Activated CD4-positive, alpha-beta memory T cell treated with anti-CD3 and anti-CD28 coated beads for 36 hours (primary cell): ENCODE measurements at regions of chr12 and their contacts with region 1.

Region 1: GRCh38 chr12:111396726-111397445 is 8.8 kb upstream of the SH2B3 start:
- DNase-seq: peak; percentile 90
- H3K4me3 Mint-ChIP-seq: peak overlapping the region; percentile 65
- H3K27ac Mint-ChIP-seq: peak overlapping the region; percentile 51
- H3K4me1 Mint-ChIP-seq: peaks cover 25% of the 10 kb centered on the region
- H3K27me3 Mint-ChIP-seq: peaks cover 9% of the 10 kb centered on the region

Region 2: GRCh38 chr12:111193496-111193895 is 203.4 kb before region 1 on chr12:
- CTCF ChIA-PET with region 1: no interaction called
- POLR2A ChIA-PET with region 1: no interaction called
- intact Hi-C with region 1: no loop called
- DNase-seq: no peak
- H3K4me3 Mint-ChIP-seq: no peak overlapping the region
- H3K27ac Mint-ChIP-seq: no peak overlapping the region
- H3K4me1 Mint-ChIP-seq: no peaks in the 10 kb centered on the region
- H3K27me3 Mint-ChIP-seq: peaks cover 7% of the 10 kb centered on the region

Region 3: DNA sequence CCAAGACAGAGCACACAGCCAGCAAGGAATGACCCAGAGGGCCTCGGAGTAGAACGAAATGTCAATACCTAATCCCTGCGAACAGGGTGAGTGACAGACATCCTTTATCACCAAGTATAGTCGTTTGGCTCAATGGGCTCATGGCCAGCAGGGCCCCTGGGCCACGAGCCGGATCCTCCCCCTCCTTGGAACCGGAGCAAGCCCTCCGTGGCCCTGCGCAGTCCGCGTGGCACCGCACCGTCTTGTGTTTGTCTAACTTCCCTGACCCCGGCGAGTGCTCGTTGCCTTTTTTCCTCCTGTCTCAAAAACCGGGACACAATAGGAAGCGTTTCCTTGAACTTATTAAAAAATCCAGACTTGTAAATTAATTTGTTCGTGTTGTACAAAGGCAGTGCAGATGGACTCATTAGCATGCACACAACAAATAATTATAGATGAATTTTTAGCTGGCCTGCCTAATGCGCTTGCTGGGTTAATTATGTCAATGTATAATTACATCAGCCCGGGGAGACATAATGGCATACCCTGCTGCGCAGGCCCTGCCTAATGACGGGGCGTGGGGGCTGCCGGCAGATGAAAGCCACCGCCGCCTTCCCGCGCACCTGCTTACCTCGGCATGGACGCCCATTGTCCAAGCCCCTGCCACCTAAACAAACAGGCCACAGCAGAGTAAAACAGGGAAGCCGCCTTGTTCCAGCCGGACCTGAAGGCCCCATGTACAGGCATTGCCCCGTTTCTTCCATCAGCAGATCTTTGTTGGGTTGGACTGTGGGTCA is 109.6 kb before region 1 on chr12:
- CTCF ChIA-PET with region 1: no interaction called
- POLR2A ChIA-PET with region 1: no interaction called
- intact Hi-C with region 1: no loop called
- DNase-seq: no peak
- H3K4me3 Mint-ChIP-seq: no peak overlapping the region
- H3K27ac Mint-ChIP-seq: no peak overlapping the region
- H3K4me1 Mint-ChIP-seq: no peaks in the 10 kb centered on the region
- H3K27me3 Mint-ChIP-seq: no peaks in the 10 kb centered on the region

Region 4: GRCh38 chr12:111368788-111369495 is 27.9 kb before region 1 on chr12 and contains the start of gene PHETA1:
- CTCF ChIA-PET with region 1: interaction called, 10 read pairs
- POLR2A ChIA-PET with region 1: no interaction called
- intact Hi-C with region 1: no loop called
- DNase-seq: peak; percentile 86
- H3K4me3 Mint-ChIP-seq: peak within 1 kb of the TSS; percentile 74
- H3K27ac Mint-ChIP-seq: no peak within 1 kb of the TSS
- H3K4me1 Mint-ChIP-seq: peaks cover 18% of the 10 kb centered on the region
- H3K27me3 Mint-ChIP-seq: no peaks in the 10 kb centered on the region
- total RNA-seq, gene PHETA1: 1.4 to 2.2 TPM

Region 5: DNA sequence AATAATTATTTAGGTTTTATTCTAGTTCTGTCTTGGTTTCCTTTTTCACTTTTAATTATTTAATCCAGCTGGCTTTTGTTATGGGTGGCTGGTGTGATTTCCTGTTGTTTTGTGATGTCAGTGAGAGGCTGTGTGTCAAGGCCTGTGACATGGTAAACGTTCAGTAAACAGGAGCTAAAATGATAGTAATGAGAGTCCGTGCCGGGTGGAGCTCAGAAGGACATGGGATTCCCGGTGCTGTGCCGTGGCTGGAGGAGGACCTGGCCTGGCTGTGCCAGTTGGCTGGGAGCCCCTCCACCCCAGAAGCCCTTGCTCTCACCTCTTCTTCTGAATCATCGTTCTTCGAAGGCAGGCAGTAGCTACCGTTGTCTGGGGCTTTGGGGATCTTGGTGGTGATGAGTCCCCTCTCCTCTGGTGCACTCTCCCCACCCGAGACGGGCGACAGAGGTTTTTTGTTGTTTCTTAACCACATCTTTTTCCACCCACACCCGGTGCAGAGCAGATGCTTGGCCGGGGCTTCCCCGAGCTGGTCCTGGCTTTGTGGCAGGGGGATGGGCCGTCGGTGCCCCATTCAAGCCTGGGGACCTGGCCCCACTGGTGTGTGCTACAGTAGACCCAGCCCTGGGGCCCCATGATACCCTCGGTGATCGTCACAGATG is 37.9 kb after region 1 on chr12:
- CTCF ChIA-PET with region 1: interaction called, 1,161 read pairs
- POLR2A ChIA-PET with region 1: interaction called, 5 read pairs
- intact Hi-C with region 1: no loop called
- DNase-seq: peak; percentile 91
- H3K4me3 Mint-ChIP-seq: peak overlapping the region; percentile 61
- H3K27ac Mint-ChIP-seq: peak overlapping the region; percentile 92
- H3K4me1 Mint-ChIP-seq: peaks cover 89% of the 10 kb centered on the region
- H3K27me3 Mint-ChIP-seq: no peaks in the 10 kb centered on the region

Region 6: DNA sequence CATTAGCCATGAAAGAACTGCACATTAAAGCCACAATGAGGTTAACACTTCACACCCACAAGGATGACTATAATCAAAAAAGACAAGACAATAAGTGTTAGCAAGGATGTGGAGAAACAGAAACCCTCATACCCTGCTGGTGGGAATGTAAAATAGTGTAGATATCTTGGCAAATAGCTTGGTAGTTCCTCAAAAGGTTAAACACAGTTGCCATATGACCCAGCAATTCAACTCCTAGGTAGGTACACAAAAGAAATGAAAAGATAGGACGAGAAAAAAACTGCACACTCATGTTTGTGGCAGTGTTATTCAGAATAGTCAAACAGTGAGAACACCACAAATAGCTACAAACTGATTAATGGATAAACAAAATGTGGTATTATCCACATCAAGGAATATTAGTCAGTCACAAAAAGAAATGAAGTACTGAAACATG is 108.7 kb after region 1 on chr12:
- CTCF ChIA-PET with region 1: interaction called, 11 read pairs
- POLR2A ChIA-PET with region 1: no interaction called
- intact Hi-C with region 1: no loop called
- DNase-seq: no peak
- H3K4me3 Mint-ChIP-seq: no peak overlapping the region
- H3K27ac Mint-ChIP-seq: no peak overlapping the region
- H3K4me1 Mint-ChIP-seq: peaks cover 11% of the 10 kb centered on the region
- H3K27me3 Mint-ChIP-seq: no peaks in the 10 kb centered on the region

Region 7: GRCh38 chr12:111677186-111677585 is 280.3 kb after region 1 on chr12:
- CTCF ChIA-PET with region 1: interaction called, 10 read pairs
- POLR2A ChIA-PET with region 1: no interaction called
- intact Hi-C with region 1: no loop called
- DNase-seq: no peak
- H3K4me3 Mint-ChIP-seq: no peak overlapping the region
- H3K27ac Mint-ChIP-seq: no peak overlapping the region
- H3K4me1 Mint-ChIP-seq: no peaks in the 10 kb centered on the region
- H3K27me3 Mint-ChIP-seq: no peaks in the 10 kb centered on the region